CD4-positive, alpha-beta T cell (primary cell): ENCODE measurements at regions of chr6 and their contacts with region 1.

Region 1: GRCh38 chr6:32153564-32154513 is at the start of gene PPT2:
- DNase-seq: peak; percentile 38 to 88 (median 64)
- ATAC-seq: peak; percentile 67
- H3K4me3 ChIP-seq: peak within 1 kb of the TSS; percentile 80
- H3K4me3 Mint-ChIP-seq: peak within 1 kb of the TSS; percentile 96
- H3K27ac ChIP-seq: peak within 1 kb of the TSS; percentile 51 to 67
- H3K27ac Mint-ChIP-seq: peak within 1 kb of the TSS; percentile 88
- H3K4me1 ChIP-seq: peaks cover 57% of the 10 kb centered on the region
- H3K4me1 Mint-ChIP-seq: peaks cover 65% of the 10 kb centered on the region
- H3K27me3 ChIP-seq: peaks cover 4 to 14% of the 10 kb centered on the region in 2 experiments
- H3K27me3 Mint-ChIP-seq: peaks cover 22% of the 10 kb centered on the region
- CTCF ChIP-seq: no peak
- total RNA-seq, gene PPT2: 8.7 to 8.9 TPM

Region 2: DNA sequence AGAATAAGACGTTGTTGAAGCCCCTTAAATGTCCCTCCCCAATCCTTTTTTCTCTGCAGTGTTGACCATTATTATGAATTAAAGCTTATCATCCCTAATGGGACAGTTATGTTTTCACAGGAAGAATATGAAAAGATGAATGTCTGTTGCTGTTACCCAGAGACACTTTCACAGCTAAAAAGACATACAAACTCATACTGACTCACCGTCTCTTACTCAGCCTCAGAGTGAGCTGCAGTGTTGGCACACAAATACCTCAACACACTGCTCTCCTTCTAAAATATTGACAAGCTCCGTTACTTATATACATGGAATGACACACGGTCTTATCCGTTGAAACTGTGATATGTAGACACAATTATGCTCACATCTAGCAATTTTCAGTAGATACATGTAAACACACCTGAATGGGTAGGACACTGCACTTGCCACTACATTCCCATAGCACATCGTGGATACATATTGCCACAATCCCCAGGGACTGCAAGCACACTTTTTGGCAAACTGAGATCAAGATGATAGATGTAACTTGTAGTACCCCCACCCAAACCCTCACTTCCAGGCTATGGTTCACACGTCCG is 401.0 kb before region 1 on chr6:
- CTCF ChIA-PET with region 1: no interaction called
- POLR2A ChIA-PET with region 1: no interaction called
- intact Hi-C with region 1: no loop called
- DNase-seq: no peak
- ATAC-seq: no peak
- H3K4me3 ChIP-seq: no peak overlapping the region
- H3K4me3 Mint-ChIP-seq: no peak overlapping the region
- H3K27ac ChIP-seq: no peak overlapping the region
- H3K27ac Mint-ChIP-seq: no peak overlapping the region
- H3K4me1 ChIP-seq: no peaks in the 10 kb centered on the region
- H3K4me1 Mint-ChIP-seq: no peaks in the 10 kb centered on the region
- H3K27me3 ChIP-seq: no peaks in the 10 kb centered on the region
- H3K27me3 Mint-ChIP-seq: no peaks in the 10 kb centered on the region
- CTCF ChIP-seq: no peak

Region 3: DNA sequence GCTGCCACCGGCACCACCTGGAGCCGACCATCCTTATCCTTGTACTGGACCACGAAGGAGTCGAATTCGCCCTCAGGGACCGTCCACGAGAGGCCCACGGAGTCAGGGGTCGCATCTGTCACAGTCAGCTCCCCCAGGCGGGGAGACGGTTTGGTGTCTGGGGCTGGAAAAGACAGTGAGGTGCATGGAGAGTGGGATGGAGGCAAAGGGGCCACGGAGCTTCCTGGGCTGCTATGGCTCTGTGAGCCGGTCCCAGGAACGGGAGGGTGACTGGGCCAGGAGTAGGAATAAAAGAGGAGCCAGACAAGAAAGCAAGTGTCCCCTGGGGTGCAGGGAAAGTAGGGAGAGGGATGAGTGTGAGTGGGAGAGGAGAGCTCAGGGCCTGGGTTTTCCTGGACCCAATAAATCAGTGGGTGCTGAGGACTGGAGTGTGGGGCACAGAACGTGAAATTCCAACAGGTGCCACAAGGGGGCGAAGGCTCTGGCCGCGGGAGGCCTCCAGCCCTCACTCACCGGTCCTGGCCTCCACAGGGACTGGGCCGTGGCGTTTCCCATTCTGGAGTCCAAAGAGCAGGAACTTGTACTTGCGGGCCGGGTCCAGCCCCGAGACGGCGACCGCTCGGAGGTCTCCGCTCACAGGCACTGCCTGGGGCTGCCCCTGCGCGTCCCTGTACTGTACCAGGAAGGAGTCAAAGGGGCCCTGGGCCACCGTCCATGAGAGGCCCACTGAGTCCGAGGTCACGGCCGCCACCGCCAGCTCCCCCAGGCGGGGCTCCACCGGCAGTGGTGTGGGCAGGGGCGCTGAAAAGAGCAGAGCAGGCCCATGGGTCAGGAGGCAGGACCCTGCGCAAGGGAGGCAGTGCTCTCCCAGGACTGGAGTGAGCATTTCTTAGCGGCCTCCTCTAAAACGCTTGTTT is 105.7 kb before region 1 on chr6:
- CTCF ChIA-PET with region 1: no interaction called
- POLR2A ChIA-PET with region 1: interaction called, 3 read pairs
- intact Hi-C with region 1: loop called in 1 of 2 experiments (anchors 10 kb)
- DNase-seq: peak; percentile 39 to 80 (median 58)
- ATAC-seq: peak; percentile 90
- H3K4me3 ChIP-seq: no peak overlapping the region
- H3K4me3 Mint-ChIP-seq: no peak overlapping the region
- H3K27ac ChIP-seq: no peak overlapping the region
- H3K27ac Mint-ChIP-seq: no peak overlapping the region
- H3K4me1 ChIP-seq: peaks cover 9% of the 10 kb centered on the region
- H3K4me1 Mint-ChIP-seq: peaks cover 5% of the 10 kb centered on the region
- H3K27me3 ChIP-seq: no peaks in the 10 kb centered on the region
- H3K27me3 Mint-ChIP-seq: no peaks in the 10 kb centered on the region
- CTCF ChIP-seq: peak; percentile 86

Region 4: DNA sequence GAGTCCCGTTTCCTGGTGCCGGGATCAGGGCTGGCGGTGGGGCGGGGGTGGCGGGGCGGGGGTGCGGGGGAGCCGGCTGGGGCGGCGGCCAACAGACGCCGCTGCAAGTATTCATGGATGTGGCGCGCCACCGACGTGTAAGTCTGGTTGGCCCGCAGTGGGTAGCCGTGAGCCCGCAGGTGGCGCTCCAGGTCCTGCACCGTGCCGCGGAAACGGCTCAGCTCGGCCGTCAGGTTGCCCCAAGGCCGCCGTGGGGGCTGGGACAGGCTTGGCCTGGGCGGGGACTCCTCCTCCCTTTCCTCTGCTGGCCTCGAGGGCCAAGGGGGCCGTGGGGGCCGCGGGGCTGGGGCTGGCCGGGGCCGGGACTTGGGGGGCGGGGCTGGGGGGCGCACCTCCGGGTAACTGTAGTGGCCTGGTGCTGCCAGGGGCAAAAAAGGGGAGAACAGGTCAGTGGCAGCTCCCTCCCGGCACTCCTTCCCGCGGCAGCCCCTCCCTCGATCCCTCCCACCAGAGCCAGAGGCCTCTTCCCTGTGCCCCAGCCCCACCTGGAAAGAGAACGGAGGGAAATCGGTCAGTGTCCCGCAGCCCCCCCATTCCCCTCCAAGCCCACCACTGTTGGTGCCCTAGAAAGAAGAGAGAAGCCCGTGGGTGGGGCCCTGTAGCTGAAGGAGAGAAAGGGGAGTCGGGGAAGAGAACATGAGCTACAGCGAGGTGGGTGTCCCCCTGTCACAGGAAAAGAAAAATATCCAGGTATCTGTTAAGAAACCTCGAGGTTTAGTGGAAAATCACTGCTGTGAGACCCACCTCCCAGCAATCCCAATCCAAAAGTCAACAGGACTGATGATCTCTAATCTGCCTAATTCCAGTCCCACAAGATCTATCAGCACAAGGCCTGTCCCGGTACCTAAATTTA is 66.0 kb before region 1 on chr6:
- CTCF ChIA-PET with region 1: no interaction called
- POLR2A ChIA-PET with region 1: no interaction called
- intact Hi-C with region 1: loop called in 1 of 2 experiments (anchors 1 kb)
- DNase-seq: peak; percentile 51 to 85 (median 64)
- ATAC-seq: peak; percentile 91
- H3K4me3 ChIP-seq: no peak overlapping the region
- H3K4me3 Mint-ChIP-seq: no peak overlapping the region
- H3K27ac ChIP-seq: no peak overlapping the region
- H3K27ac Mint-ChIP-seq: no peak overlapping the region
- H3K4me1 ChIP-seq: peaks cover 12% of the 10 kb centered on the region
- H3K4me1 Mint-ChIP-seq: peaks cover 6% of the 10 kb centered on the region
- H3K27me3 ChIP-seq: peaks cover 17 to 18% of the 10 kb centered on the region in 2 experiments
- H3K27me3 Mint-ChIP-seq: peaks cover 42% of the 10 kb centered on the region
- CTCF ChIP-seq: peak; percentile 47

Region 5: GRCh38 chr6:32112431-32112980 is 41.3 kb before region 1 on chr6:
- CTCF ChIA-PET with region 1: no interaction called
- POLR2A ChIA-PET with region 1: no interaction called
- intact Hi-C with region 1: no loop called
- DNase-seq: no peak
- ATAC-seq: no peak
- H3K4me3 ChIP-seq: no peak overlapping the region
- H3K4me3 Mint-ChIP-seq: no peak overlapping the region
- H3K27ac ChIP-seq: no peak overlapping the region
- H3K27ac Mint-ChIP-seq: peak overlapping the region; percentile 45
- H3K4me1 ChIP-seq: peaks cover 21% of the 10 kb centered on the region
- H3K4me1 Mint-ChIP-seq: peaks cover 21% of the 10 kb centered on the region
- H3K27me3 ChIP-seq: peaks cover 3% of the 10 kb centered on the region in 2 experiments
- H3K27me3 Mint-ChIP-seq: no peaks in the 10 kb centered on the region
- CTCF ChIP-seq: no peak

Region 6: GRCh38 chr6:32255199-32256153 is 101.6 kb after region 1 on chr6:
- CTCF ChIA-PET with region 1: no interaction called
- POLR2A ChIA-PET with region 1: no interaction called
- intact Hi-C with region 1: no loop called
- DNase-seq: peak; percentile 19 to 87 (median 34)
- ATAC-seq: peak; percentile 82
- H3K4me3 ChIP-seq: peak overlapping the region; percentile 35
- H3K4me3 Mint-ChIP-seq: peak overlapping the region; percentile 63
- H3K27ac ChIP-seq: no peak overlapping the region
- H3K27ac Mint-ChIP-seq: no peak overlapping the region
- H3K4me1 ChIP-seq: peaks cover 16% of the 10 kb centered on the region
- H3K4me1 Mint-ChIP-seq: peaks cover 27% of the 10 kb centered on the region
- H3K27me3 ChIP-seq: no peaks in the 10 kb centered on the region
- H3K27me3 Mint-ChIP-seq: no peaks in the 10 kb centered on the region
- CTCF ChIP-seq: peak; percentile 54

Region 7: DNA sequence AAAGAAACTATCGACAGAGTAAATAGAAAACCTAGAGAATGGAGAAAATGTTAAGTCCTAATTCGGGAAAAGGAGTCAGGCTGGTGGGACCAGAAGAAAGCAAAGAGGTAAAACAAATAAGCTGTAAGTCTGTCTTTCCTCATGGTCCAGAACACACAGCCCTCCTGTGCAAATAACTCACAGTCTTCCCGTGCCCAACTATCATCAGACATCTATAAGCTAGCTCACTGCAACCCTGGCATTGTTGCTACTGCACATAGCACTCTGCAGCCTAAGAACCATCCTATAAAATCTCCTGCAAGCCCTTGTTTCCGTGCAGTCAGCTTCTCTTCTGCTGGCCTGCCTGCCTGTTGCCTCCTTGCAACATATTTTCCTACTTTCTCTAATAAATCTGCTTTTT is 303.2 kb after region 1 on chr6:
- CTCF ChIA-PET with region 1: no interaction called
- POLR2A ChIA-PET with region 1: no interaction called
- intact Hi-C with region 1: no loop called
- DNase-seq: no peak
- ATAC-seq: no peak
- H3K4me3 ChIP-seq: no peak overlapping the region
- H3K4me3 Mint-ChIP-seq: no peak overlapping the region
- H3K27ac ChIP-seq: no peak overlapping the region
- H3K27ac Mint-ChIP-seq: no peak overlapping the region
- H3K4me1 ChIP-seq: peaks cover 10% of the 10 kb centered on the region
- H3K4me1 Mint-ChIP-seq: no peaks in the 10 kb centered on the region
- H3K27me3 ChIP-seq: peaks cover 17 to 27% of the 10 kb centered on the region in 2 experiments
- H3K27me3 Mint-ChIP-seq: peaks cover 65% of the 10 kb centered on the region
- CTCF ChIP-seq: no peak